Natural killer cell (primary cell): ENCODE measurements at regions of chr3 and their contacts with region 1.

Region 1: GRCh38 chr3:15629860-15630597 is 28.5 kb downstream of the BTD start:
- DNase-seq: peak; percentile 43 to 87
- ATAC-seq: peak; percentile 98 to 100 (median 100)
- H3K4me3 ChIP-seq: no peak overlapping the region
- H3K4me3 Mint-ChIP-seq: peak overlapping the region; percentile 78
- H3K27ac ChIP-seq: no peak overlapping the region
- H3K27ac Mint-ChIP-seq: peak overlapping the region; percentile 2 to 59
- H3K4me1 ChIP-seq: peaks cover 6% of the 10 kb centered on the region
- H3K4me1 Mint-ChIP-seq: peaks cover 24 to 28% of the 10 kb centered on the region in 2 donors
- H3K27me3 ChIP-seq: no peaks in the 10 kb centered on the region
- H3K27me3 Mint-ChIP-seq: no peaks in the 10 kb centered on the region
- CTCF ChIP-seq: peak; percentile 75

Region 2: DNA sequence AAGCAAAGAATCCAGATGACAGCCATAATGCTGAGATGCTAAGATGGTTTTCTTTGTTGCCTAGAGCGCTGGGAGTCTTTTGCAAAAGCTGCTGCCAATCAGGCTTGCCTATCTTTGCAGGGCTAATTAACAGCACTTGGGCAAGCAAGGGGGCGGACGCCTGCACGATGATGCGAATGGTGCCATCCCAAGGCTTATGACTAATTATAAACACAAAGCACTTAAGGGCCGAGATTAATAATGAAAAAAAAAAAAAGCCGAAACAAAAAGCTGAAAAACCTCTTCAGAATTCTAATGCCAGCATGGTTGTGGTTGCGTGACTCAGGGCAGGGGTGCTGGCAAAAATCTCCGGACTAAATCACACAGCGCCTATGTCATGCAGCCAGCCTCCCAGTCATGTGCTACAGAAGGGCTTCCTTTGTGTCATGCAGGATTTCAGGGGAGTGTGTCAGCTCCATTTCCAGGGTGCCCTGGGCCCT is 352.7 kb after region 1 on chr3:
- intact Hi-C with region 1: no loop called
- DNase-seq: no peak
- ATAC-seq: no peak
- H3K4me3 ChIP-seq: no peak overlapping the region
- H3K4me3 Mint-ChIP-seq: no peak overlapping the region
- H3K27ac ChIP-seq: no peak overlapping the region
- H3K27ac Mint-ChIP-seq: no peak overlapping the region
- H3K4me1 ChIP-seq: no peaks in the 10 kb centered on the region
- H3K4me1 Mint-ChIP-seq: no peaks in the 10 kb centered on the region
- H3K27me3 ChIP-seq: no peaks in the 10 kb centered on the region
- H3K27me3 Mint-ChIP-seq: peaks cover 10 to 14% of the 10 kb centered on the region in 2 donors
- CTCF ChIP-seq: no peak

Region 3: GRCh38 chr3:16247276-16248061 is 617.4 kb after region 1 on chr3:
- intact Hi-C with region 1: loop called (anchors 2 kb)
- DNase-seq: peak; percentile 64 to 91
- ATAC-seq: peak; percentile 90 to 98 (median 97)
- H3K4me3 ChIP-seq: no peak overlapping the region
- H3K4me3 Mint-ChIP-seq: no peak overlapping the region
- H3K27ac ChIP-seq: no peak overlapping the region
- H3K27ac Mint-ChIP-seq: no peak overlapping the region
- H3K4me1 ChIP-seq: peaks cover 5% of the 10 kb centered on the region
- H3K4me1 Mint-ChIP-seq: peaks cover 0 to 11% of the 10 kb centered on the region in 2 donors
- H3K27me3 ChIP-seq: no peaks in the 10 kb centered on the region
- H3K27me3 Mint-ChIP-seq: no peaks in the 10 kb centered on the region
- CTCF ChIP-seq: peak; percentile 89